PC-3 (cell line): ENCODE measurements at regions of chr6 and their contacts with region 1.

Region 1: GRCh38 chr6:21748343-21749056 is 154.9 kb downstream of the SOX4 start:
- DNase-seq: peak; percentile 76
- ATAC-seq: peak; percentile 62
- H3K4me3 ChIP-seq: no peak overlapping the region
- H3K27ac ChIP-seq: no peak overlapping the region
- H3K4me1 ChIP-seq: peaks cover 39% of the 10 kb centered on the region
- H3K27me3 ChIP-seq: no peaks in the 10 kb centered on the region
- CTCF ChIP-seq: no peak

Region 2: GRCh38 chr6:21522797-21523456 is 225.6 kb before region 1 on chr6:
- CTCF ChIA-PET with region 1: no interaction called
- POLR2A ChIA-PET with region 1: no interaction called
- intact Hi-C with region 1: no loop called
- DNase-seq: peak; percentile 30
- ATAC-seq: peak; percentile 80
- H3K4me3 ChIP-seq: no peak overlapping the region
- H3K27ac ChIP-seq: no peak overlapping the region
- H3K4me1 ChIP-seq: no peaks in the 10 kb centered on the region
- H3K27me3 ChIP-seq: no peaks in the 10 kb centered on the region
- CTCF ChIP-seq: peak; percentile 53

Region 3: DNA sequence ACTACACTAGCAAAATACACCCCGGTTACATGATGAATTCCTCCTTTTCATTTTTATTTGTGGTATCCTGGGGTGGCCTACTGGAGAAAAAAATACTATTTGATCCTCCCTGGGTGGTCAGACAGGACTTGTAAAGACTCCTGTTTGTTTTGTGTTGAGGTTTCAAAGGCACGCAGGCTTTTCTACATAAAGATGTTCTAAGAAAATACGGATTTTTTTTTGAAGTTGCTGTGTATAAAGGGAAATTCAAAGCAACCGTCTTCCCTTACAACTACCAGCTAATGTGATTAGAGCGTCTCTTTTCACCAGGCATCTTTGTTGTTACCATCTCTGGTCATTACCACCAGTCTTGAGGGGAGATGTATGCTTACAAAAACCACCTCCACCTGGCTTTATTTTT is 32.2 kb after region 1 on chr6:
- CTCF ChIA-PET with region 1: no interaction called
- POLR2A ChIA-PET with region 1: no interaction called
- intact Hi-C with region 1: no loop called
- DNase-seq: no peak
- ATAC-seq: no peak
- H3K4me3 ChIP-seq: no peak overlapping the region
- H3K27ac ChIP-seq: no peak overlapping the region
- H3K4me1 ChIP-seq: no peaks in the 10 kb centered on the region
- H3K27me3 ChIP-seq: no peaks in the 10 kb centered on the region
- CTCF ChIP-seq: no peak

Region 4: DNA sequence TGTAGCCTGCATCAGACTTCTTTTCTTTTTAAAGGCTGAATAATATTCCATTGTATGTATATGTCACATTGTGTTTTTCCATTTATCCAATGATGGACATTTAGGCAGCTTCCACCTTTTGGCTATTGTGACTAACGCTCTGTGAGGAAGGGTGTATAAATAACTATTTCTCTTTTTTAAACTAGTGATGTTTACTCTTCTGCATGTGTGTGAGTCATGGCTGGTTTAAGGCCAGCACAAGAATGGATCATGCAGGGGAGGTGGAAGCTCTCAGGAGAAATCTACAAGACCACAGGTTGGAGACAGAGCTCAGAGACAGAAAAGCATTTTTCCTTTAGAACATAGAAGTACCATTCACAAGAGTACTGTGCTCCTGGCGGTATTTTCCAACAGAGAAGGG is 152.2 kb after region 1 on chr6:
- CTCF ChIA-PET with region 1: no interaction called
- POLR2A ChIA-PET with region 1: no interaction called
- intact Hi-C with region 1: loop called (anchors 10 kb)
- DNase-seq: peak; percentile 89
- ATAC-seq: peak; percentile 99
- H3K4me3 ChIP-seq: no peak overlapping the region
- H3K27ac ChIP-seq: peak overlapping the region; percentile 37
- H3K4me1 ChIP-seq: peaks cover 14% of the 10 kb centered on the region
- H3K27me3 ChIP-seq: no peaks in the 10 kb centered on the region
- CTCF ChIP-seq: no peak